PC-9 (cell line): ENCODE measurements at regions of chr11 and their contacts with region 1.

Region 1: DNA sequence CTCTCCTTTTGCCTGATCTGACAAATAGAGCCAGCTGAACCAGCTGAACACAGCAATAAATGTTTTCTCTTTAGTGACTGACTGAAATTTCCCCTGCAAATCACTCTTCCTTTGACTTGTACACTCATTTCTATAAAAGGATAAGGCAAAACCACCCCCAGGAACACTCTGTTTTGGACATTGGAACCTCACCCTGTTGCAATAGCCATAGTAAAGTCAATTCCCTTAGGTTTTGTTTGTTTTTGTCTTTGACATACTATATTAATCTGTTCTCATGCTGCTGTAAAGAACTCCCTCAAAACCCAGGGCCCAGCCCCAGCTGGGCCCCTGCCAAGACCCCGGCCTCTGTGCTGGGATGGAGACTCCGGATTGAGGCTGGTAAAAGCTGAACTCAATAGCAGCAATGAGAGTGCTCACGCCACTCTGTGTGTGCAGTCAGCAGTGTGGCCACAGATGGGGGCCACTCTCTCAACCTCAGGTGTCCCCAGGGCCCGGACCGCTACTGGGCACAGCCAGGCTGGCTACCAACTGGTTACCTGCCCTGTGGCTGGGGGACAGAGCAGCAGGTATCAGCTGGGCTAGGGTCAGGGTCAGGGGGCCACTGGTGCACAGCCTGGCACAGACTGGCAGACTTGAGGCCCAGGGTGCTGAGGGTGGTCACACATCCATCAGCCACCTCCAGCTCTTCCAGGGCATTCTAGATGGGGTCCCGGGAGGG is 597.4 kb downstream of the LUZP2 start:
- DNase-seq: no peak
- H3K4me3 ChIP-seq: no peak overlapping the region
- H3K27ac ChIP-seq: no peak overlapping the region
- H3K4me1 ChIP-seq: no peaks in the 10 kb centered on the region
- H3K27me3 ChIP-seq: no peaks in the 10 kb centered on the region
- CTCF ChIP-seq: no peak

Region 2: DNA sequence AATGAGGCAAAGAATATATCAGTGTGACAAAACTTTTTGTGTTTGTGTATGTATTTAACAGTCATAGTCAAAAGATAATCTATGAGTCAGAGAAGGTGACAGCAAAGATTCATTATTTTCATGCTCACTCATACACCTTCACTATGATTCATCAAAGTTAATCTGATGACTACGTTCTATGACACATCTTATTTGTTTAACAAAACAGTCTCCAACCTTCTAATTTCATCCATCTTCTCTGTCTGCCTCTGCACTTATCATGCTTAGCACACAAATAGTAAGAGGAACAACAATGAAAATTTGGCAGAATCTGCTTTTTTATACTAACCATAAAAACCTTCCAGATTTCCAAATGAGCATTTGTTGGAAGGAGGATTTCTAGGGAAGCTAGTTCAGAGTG is 28.5 kb before region 1 on chr11:
- CTCF ChIA-PET with region 1: no interaction called
- POLR2A ChIA-PET with region 1: no interaction called
- intact Hi-C with region 1: no loop called
- DNase-seq: peak in 1 of 2 experiments; percentile 80
- H3K4me3 ChIP-seq: no peak overlapping the region
- H3K27ac ChIP-seq: peak overlapping the region; percentile 53
- H3K4me1 ChIP-seq: peaks cover 15% of the 10 kb centered on the region; the same call in 1 of the 2 replicates
- H3K27me3 ChIP-seq: no peaks in the 10 kb centered on the region
- CTCF ChIP-seq: no peak

Region 3: DNA sequence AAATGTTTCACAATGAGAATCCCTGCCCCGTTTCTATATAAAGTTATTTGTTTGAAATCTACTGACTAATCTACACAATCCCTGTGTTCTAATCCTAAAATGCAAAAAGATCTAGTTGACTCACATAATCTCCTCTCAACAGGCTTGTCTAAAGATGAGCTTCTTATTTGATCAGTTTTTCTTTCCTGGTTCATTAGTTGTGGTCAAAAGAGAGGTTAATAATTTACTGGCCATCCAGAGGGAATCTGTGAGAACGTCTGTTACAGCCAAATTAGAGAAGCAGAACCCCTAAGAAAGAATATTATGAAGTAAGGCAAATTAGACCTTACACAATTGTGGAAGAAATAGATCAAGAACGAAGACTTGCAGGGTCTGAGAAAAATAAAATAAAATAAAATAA is 1064.0 kb after region 1 on chr11:
- CTCF ChIA-PET with region 1: no interaction called
- POLR2A ChIA-PET with region 1: no interaction called
- intact Hi-C with region 1: no loop called
- DNase-seq: no peak
- H3K4me3 ChIP-seq: no peak overlapping the region
- H3K27ac ChIP-seq: no peak overlapping the region
- H3K4me1 ChIP-seq: no peaks in the 10 kb centered on the region
- H3K27me3 ChIP-seq: no peaks in the 10 kb centered on the region
- CTCF ChIP-seq: no peak

Region 4: DNA sequence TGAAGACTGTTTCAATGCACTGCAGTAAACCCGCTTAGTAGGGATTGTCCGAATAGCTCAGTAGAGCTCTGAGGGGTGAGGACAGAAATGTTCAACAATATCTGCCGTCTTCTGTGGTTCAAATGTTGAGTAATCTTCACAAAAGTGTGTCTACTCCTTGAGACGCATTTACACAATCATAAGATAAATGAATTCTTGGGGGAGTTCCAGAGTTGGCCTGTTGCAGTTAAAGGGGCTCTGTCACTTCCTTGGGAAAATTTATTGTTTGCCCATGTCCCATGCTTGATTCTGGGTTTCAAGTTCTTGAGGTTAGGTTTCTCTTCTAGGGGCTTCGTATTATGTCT is 1238.3 kb after region 1 on chr11:
- CTCF ChIA-PET with region 1: interaction called, 10 read pairs
- POLR2A ChIA-PET with region 1: no interaction called
- intact Hi-C with region 1: no loop called
- DNase-seq: no peak
- H3K4me3 ChIP-seq: no peak overlapping the region
- H3K27ac ChIP-seq: no peak overlapping the region
- H3K4me1 ChIP-seq: no peaks in the 10 kb centered on the region
- H3K27me3 ChIP-seq: no peaks in the 10 kb centered on the region
- CTCF ChIP-seq: no peak